CD4-positive, alpha-beta T cell (primary cell): ENCODE measurements at regions of chr1 and their contacts with region 1.

Region 1: DNA sequence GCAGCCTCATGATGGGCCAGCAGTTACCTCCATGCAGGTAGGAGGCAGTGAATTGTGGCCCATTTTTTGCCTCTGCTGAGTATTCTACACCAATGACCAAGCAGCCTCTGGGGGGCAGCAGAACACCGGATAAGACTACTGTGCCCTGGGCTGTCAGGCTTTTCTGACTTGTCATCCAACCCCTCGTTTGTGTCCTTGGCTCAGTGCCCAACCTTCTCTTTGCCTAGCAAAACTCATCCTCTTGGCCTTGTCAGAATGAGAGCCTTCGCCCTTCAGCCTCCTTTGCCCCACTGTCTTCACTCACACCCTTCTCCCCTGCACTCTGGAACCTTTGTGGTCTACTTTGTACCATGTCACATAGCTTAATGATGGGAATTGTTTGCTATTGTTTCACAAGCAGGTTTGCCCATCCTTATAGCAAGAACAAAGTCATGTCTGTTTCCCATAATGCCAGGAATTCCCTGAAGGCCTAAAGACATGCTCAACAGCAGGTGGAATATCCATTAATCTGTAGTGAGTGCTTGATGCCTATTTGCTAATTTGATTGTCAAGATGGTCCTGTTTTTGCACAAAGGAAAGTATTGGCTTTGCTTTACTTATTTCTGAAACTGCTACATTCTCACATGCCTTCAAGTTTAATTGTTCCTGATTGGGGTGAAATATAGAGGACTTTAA is 255.9 kb downstream of the HHAT start:
- DNase-seq: peak; percentile 25 to 67 (median 41)
- ATAC-seq: peak; percentile 51
- H3K4me3 ChIP-seq: no peak overlapping the region
- H3K4me3 Mint-ChIP-seq: no peak overlapping the region
- H3K27ac ChIP-seq: no peak overlapping the region
- H3K27ac Mint-ChIP-seq: no peak overlapping the region
- H3K4me1 ChIP-seq: no peaks in the 10 kb centered on the region
- H3K4me1 Mint-ChIP-seq: peaks cover 8% of the 10 kb centered on the region
- H3K27me3 ChIP-seq: no peaks in the 10 kb centered on the region
- H3K27me3 Mint-ChIP-seq: no peaks in the 10 kb centered on the region
- CTCF ChIP-seq: peak; percentile 40

Region 2: GRCh38 chr1:211133836-211134669 is 549.5 kb after region 1 on chr1 and contains the start of gene KCNH1:
- CTCF ChIA-PET with region 1: no interaction called
- POLR2A ChIA-PET with region 1: no interaction called
- intact Hi-C with region 1: loop called (anchors 2 to 5 kb)
- DNase-seq: peak; percentile 52 to 87 (median 66)
- ATAC-seq: peak; percentile 88
- H3K4me3 ChIP-seq: peak within 1 kb of the TSS; percentile 51
- H3K4me3 Mint-ChIP-seq: peak within 1 kb of the TSS; percentile 71
- H3K27ac ChIP-seq: no peak within 1 kb of the TSS
- H3K27ac Mint-ChIP-seq: no peak within 1 kb of the TSS
- H3K4me1 ChIP-seq: peaks cover 18% of the 10 kb centered on the region
- H3K4me1 Mint-ChIP-seq: peaks cover 9% of the 10 kb centered on the region
- H3K27me3 ChIP-seq: peaks cover 26 to 64% of the 10 kb centered on the region in 2 experiments
- H3K27me3 Mint-ChIP-seq: peaks cover 80% of the 10 kb centered on the region
- CTCF ChIP-seq: peak; percentile 77
- total RNA-seq, gene KCNH1: not detected

Region 3: DNA sequence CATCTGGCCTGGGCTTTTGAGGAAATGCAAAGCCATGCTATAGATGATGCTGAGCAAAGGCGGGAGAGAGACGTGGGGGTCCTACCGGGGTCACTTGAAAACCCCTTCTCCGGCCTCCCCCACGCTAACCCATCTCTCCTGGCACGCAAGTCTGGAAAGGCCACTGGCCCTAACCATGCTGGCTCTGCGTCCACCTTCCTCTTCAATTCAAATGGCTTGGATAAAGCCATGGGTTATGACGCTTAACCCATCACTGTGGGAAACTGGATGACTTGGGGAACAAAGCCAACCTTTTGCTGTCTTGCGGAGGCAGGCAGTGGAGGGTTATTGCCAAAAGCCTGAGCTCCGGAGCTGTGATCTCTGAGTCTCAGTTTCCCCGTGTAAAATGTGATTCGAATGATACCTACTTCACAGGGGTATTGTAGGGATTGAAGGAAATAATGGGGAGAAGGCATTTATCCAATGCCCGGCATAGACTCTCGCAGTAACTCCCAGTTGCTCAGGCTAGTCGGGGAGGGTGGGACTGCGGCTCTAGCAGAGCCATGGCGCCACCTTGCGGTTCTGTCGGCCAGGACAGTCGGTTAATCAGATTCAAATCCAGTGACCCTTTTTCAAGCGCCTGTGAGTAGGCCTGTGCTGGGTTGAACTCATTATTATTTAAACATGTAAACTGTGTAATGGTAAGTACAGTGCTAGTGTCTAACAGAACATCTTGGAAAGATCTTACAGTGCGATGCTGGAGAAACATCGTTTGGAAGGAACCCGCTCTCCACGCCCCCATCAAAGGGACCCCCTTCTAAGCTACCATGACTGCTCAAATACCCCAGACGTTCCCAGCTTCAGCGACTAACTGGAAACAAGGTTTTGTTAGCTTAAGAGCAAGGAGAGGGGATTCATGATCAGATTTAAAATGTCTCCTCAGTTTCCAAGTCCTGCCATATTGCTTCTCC is 1070.5 kb after region 1 on chr1:
- CTCF ChIA-PET with region 1: no interaction called
- POLR2A ChIA-PET with region 1: no interaction called
- intact Hi-C with region 1: loop called in 1 of 2 experiments (anchors 10 kb)
- DNase-seq: peak; percentile 68 to 88 (median 78)
- ATAC-seq: peak; percentile 98
- H3K4me3 ChIP-seq: no peak overlapping the region
- H3K4me3 Mint-ChIP-seq: no peak overlapping the region
- H3K27ac ChIP-seq: no peak overlapping the region
- H3K27ac Mint-ChIP-seq: no peak overlapping the region
- H3K4me1 ChIP-seq: peaks cover 5% of the 10 kb centered on the region
- H3K4me1 Mint-ChIP-seq: no peaks in the 10 kb centered on the region
- H3K27me3 ChIP-seq: no peaks in the 10 kb centered on the region
- H3K27me3 Mint-ChIP-seq: no peaks in the 10 kb centered on the region
- CTCF ChIP-seq: peak; percentile 89